ENCODE measurements at regions of chrX and their contacts with region 1.

Region 1: GRCh38 chrX:31266172-31267076 is 194.6 kb upstream of the FTHL17 start:
- DNase-seq: peak; percentile 43
- ATAC-seq: peak; percentile 94
- H3K4me3 Mint-ChIP-seq: peak overlapping the region; percentile 88
- H3K27ac Mint-ChIP-seq: peak overlapping the region; percentile 30
- H3K4me1 Mint-ChIP-seq: peaks cover 4% of the 10 kb centered on the region
- H3K27me3 Mint-ChIP-seq: no peaks in the 10 kb centered on the region
- CTCF ChIP-seq: no peak

Region 2: GRCh38 chrX:31168551-31168950 is 97.9 kb before region 1 on chrX:
- CTCF ChIA-PET with region 1: no interaction called
- POLR2A ChIA-PET with region 1: no interaction called
- intact Hi-C with region 1: loop called (anchors 2 kb)
- DNase-seq: no peak
- ATAC-seq: peak; percentile 90
- H3K4me3 Mint-ChIP-seq: peak overlapping the region; percentile 11
- H3K27ac Mint-ChIP-seq: peak overlapping the region; percentile 56
- H3K4me1 Mint-ChIP-seq: peaks cover 35% of the 10 kb centered on the region
- H3K27me3 Mint-ChIP-seq: no peaks in the 10 kb centered on the region
- CTCF ChIP-seq: no peak

Region 3: DNA sequence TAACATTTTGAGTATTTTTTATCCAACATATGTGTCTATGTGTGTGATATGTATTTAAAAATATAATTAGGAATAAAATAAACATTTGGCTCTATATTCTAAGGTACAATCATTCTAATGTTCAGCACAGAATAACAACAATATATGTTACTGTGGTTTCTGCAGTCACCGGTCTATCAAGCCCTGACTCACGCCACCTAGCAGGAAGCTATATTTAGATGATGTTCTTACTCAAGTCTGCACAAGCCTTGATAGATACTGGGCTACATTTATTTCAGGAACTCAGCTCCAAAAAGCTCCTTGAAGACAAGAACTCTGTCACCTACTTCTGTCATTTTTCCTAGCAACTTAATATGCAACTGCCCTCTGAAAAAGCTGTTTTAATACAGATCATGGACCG is 42.6 kb before region 1 on chrX:
- CTCF ChIA-PET with region 1: no interaction called
- POLR2A ChIA-PET with region 1: interaction called, 14 read pairs
- intact Hi-C with region 1: loop called (anchors 2 kb)
- DNase-seq: no peak
- ATAC-seq: peak; percentile 78
- H3K4me3 Mint-ChIP-seq: peak overlapping the region; percentile 39
- H3K27ac Mint-ChIP-seq: peak overlapping the region; percentile 69
- H3K4me1 Mint-ChIP-seq: peaks cover 30% of the 10 kb centered on the region
- H3K27me3 Mint-ChIP-seq: no peaks in the 10 kb centered on the region
- CTCF ChIP-seq: no peak

Region 4: DNA sequence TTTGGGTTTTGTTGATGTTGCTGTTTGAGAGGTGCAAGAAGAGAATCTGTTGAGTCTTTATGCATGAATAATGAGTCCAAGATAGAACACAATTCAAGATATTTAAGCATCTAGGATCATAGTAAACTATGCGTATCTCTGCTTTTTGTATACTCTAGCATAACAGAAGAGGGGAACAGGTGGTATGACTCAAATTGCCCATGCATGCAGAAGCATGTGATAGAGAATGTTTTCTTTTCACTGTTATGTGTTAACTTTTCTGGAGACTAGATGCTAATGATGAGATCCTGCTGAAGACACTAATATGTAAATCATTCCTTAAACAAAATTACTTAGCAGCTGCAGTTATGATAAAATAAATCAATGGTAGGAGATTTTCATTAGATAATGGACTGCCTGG is 29.2 kb before region 1 on chrX:
- CTCF ChIA-PET with region 1: no interaction called
- POLR2A ChIA-PET with region 1: interaction called, 5 read pairs
- intact Hi-C with region 1: loop called (anchors 2 kb)
- DNase-seq: no peak
- ATAC-seq: peak; percentile 48
- H3K4me3 Mint-ChIP-seq: no peak overlapping the region
- H3K27ac Mint-ChIP-seq: peak overlapping the region; percentile 41
- H3K4me1 Mint-ChIP-seq: peaks cover 64% of the 10 kb centered on the region
- H3K27me3 Mint-ChIP-seq: no peaks in the 10 kb centered on the region
- CTCF ChIP-seq: no peak

Region 5: DNA sequence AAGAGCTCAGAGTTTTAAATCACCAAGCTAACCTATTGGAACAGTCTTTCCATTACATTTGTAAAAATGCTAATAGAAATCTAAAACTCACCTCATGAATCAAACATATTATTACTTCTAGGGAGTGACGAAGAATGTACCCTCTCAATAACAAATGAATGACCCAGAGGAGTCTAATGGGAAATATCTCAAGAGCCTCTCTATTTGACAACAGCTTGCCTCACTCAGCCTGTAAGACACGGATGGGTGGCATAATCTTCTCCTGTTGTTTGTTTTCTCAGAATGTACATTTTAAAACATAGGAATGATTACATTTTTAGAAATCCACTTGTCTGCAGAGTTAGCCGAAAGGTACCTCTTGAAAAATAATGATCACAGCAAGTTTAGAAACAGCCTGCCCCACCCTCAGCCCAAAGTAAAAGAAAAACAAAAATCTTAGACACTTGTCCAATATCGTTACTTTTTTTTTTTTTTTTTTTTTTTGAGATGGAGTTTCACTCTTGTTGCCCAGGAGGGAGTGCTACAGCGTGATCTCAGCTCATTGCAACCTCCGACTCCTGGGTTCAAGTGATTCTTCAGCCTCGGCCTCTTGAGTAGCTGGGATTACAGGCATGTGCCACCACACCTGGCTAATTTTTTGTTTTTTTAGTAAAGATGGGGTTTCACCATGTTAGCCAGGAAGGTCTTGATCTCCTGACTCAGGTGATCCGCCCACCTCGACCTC is 11.0 kb before region 1 on chrX:
- CTCF ChIA-PET with region 1: no interaction called
- POLR2A ChIA-PET with region 1: interaction called, 14 read pairs
- intact Hi-C with region 1: no loop called
- DNase-seq: no peak
- ATAC-seq: no peak
- H3K4me3 Mint-ChIP-seq: no peak overlapping the region
- H3K27ac Mint-ChIP-seq: no peak overlapping the region
- H3K4me1 Mint-ChIP-seq: no peaks in the 10 kb centered on the region
- H3K27me3 Mint-ChIP-seq: no peaks in the 10 kb centered on the region
- CTCF ChIP-seq: no peak

Measured in activated B cell treated with CpG ODN at 0.5 μM for 24 hours (primary cell).